ENCODE measurements at regions of chr11 and their contacts with region 1.

Region 1: GRCh38 chr11:9460322-9461067 is at the start of gene ZNF143:
- DNase-seq: peak; percentile 95 to 100 (median 100)
- ATAC-seq: peak; percentile 85 to 89
- H3K4me3 Mint-ChIP-seq: peak within 1 kb of the TSS; percentile 88 to 99 (median 96)
- H3K27ac Mint-ChIP-seq: peak within 1 kb of the TSS; percentile 91 to 99 (median 98)
- H3K4me1 Mint-ChIP-seq: peaks cover 9 to 34% (median 33%) of the 10 kb centered on the region in 4 donors
- H3K27me3 Mint-ChIP-seq: peaks cover 0 to 1% (median 0%) of the 10 kb centered on the region in 5 donors
- polyA plus RNA-seq, gene ZNF143: 28.1 to 38.5 (median 32.9) TPM

Region 2: GRCh38 chr11:8964324-8965320 is 495.9 kb before region 1 on chr11 and contains the start of gene TMEM9B:
- POLR2A ChIA-PET with region 1: interaction called, 13 read pairs
- DNase-seq: peak; percentile 50 to 84 (median 71)
- ATAC-seq: peak; percentile 66 to 82
- H3K4me3 Mint-ChIP-seq: peak within 1 kb of the TSS; percentile 94 to 100 (median 98)
- H3K27ac Mint-ChIP-seq: peak within 1 kb of the TSS; percentile 97 to 99 (median 98)
- H3K4me1 Mint-ChIP-seq: peaks cover 16 to 43% (median 37%) of the 10 kb centered on the region in 4 donors
- H3K27me3 Mint-ChIP-seq: no peaks in the 10 kb centered on the region
- polyA plus RNA-seq, gene TMEM9B: 80.3 to 103 (median 90.6) TPM

Region 3: DNA sequence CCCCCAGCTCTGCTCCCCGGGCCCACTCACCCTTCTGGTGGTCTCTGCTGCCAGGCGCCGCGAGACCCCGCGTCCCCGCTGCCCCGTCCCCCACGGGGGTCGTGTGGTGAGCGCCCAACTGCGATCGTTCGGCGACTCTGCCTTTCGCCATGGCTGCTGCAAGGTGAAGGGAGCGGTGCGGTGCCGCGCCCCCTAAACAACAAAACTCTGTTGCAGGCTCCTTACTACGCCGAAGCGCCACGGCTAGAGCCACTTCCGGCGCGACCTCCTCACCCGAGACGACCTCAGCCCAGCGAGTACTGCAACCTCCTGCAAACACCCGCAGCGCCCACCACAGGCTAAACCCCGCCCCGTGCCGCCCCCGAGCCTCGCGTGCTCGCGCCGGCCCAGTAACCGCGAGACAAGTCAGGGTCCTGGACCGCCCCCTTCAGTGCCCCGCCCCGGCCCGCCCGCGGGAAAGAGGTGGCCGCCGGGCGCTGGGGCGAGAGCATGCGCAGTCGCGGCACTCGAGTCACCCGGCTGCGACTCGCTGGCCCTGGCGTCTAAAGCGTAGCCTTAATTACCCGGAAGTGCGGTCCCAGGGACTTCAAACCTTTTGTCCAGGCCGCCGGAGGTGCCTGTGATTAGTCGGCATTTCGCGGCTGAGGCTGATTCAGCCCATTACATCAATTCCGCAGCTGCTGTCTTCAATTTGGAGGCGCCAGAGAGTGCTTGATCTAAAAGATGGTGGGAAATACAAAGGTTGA is 146.0 kb before region 1 on chr11 and contains the start of gene TMEM41B:
- POLR2A ChIA-PET with region 1: interaction called, 44 read pairs
- DNase-seq: peak; percentile 98 to 100 (median 100)
- ATAC-seq: peak; percentile 92 to 93
- H3K4me3 Mint-ChIP-seq: peak within 1 kb of the TSS; percentile 95 to 100 (median 100)
- H3K27ac Mint-ChIP-seq: peak within 1 kb of the TSS; percentile 97 to 100 (median 99)
- H3K4me1 Mint-ChIP-seq: peaks cover 17 to 58% (median 47%) of the 10 kb centered on the region in 4 donors
- H3K27me3 Mint-ChIP-seq: peaks cover 0 to 4% (median 0%) of the 10 kb centered on the region in 5 donors
- polyA plus RNA-seq, gene TMEM41B: 7.4 to 16.3 (median 7.5) TPM

Region 4: GRCh38 chr11:9384535-9385303 is 75.8 kb before region 1 on chr11 and contains the start of gene IPO7:
- POLR2A ChIA-PET with region 1: interaction called, 22 read pairs
- DNase-seq: peak; percentile 75 to 91 (median 84)
- ATAC-seq: peak; percentile 98 to 99
- H3K4me3 Mint-ChIP-seq: peak within 1 kb of the TSS; percentile 90 to 97 (median 96)
- H3K27ac Mint-ChIP-seq: peak within 1 kb of the TSS; percentile 81 to 98 (median 94)
- H3K4me1 Mint-ChIP-seq: peaks cover 10 to 41% (median 39%) of the 10 kb centered on the region in 4 donors
- H3K27me3 Mint-ChIP-seq: no peaks in the 10 kb centered on the region
- polyA plus RNA-seq, gene IPO7: 3.7 to 11.2 (median 5.9) TPM

Region 5: GRCh38 chr11:9573052-9573774 is 112.7 kb after region 1 on chr11 and contains the start of gene WEE1:
- POLR2A ChIA-PET with region 1: interaction called, 14 read pairs
- DNase-seq: peak; percentile 81 to 95 (median 88)
- ATAC-seq: peak; percentile 93 to 94
- H3K4me3 Mint-ChIP-seq: peak within 1 kb of the TSS; percentile 74 to 90 (median 84)
- H3K27ac Mint-ChIP-seq: peak within 1 kb of the TSS in 9 of 10 donors; percentile 37 to 85 (median 62)
- H3K4me1 Mint-ChIP-seq: peaks cover 6 to 36% (median 9%) of the 10 kb centered on the region in 4 donors
- H3K27me3 Mint-ChIP-seq: peaks cover 0 to 22% (median 14%) of the 10 kb centered on the region in 5 donors
- polyA plus RNA-seq, gene WEE1: 0.33 to 5.1 TPM in 2 of 3 donors, not detected in the other

Measured in naive thymus-derived CD8-positive, alpha-beta T cell (primary cell).